GM12878 (cell line): ENCODE measurements at regions of chr4 and their contacts with region 1.

Region 1: GRCh38 chr4:109559983-109560686 is at the start of gene MCUB:
- DNase-seq: peak; percentile 49
- ATAC-seq: peak; percentile 95
- H3K4me3 ChIP-seq: peak within 1 kb of the TSS; percentile 85
- H3K27ac ChIP-seq: peak within 1 kb of the TSS; percentile 87
- H3K4me1 ChIP-seq: peaks cover 3% of the 10 kb centered on the region; the same call in 1 of the 2 replicates
- H3K27me3 ChIP-seq: no peaks in the 10 kb centered on the region
- CTCF ChIP-seq: no peak
- EP300 ChIP-seq: no peak
- POLR2A ChIP-seq: peak; percentile 87
- RAD21 ChIP-seq: peak; percentile 26; the same call in 1 of the 2 replicates
- polyA plus RNA-seq, gene MCUB: 4.7 to 10.7 TPM

Region 2: GRCh38 chr4:109067508-109068210 is 492.5 kb before region 1 on chr4:
- CTCF ChIA-PET with region 1: no interaction called
- POLR2A ChIA-PET with region 1: no interaction called
- RAD21 ChIA-PET with region 1: no interaction called
- SMC1A ChIA-PET with region 1: no interaction called
- in situ Hi-C with region 1: no loop called
- intact Hi-C with region 1: no loop called
- DNase-seq: no peak
- ATAC-seq: no peak
- H3K4me3 ChIP-seq: no peak overlapping the region
- H3K27ac ChIP-seq: no peak overlapping the region
- H3K4me1 ChIP-seq: no peaks in the 10 kb centered on the region
- H3K27me3 ChIP-seq: no peaks in the 10 kb centered on the region
- CTCF ChIP-seq: no peak
- EP300 ChIP-seq: no peak
- POLR2A ChIP-seq: no peak
- RAD21 ChIP-seq: no peak

Region 3: GRCh38 chr4:109574102-109574850 is 14.1 kb after region 1 on chr4:
- CTCF ChIA-PET with region 1: interaction called, 17 read pairs
- POLR2A ChIA-PET with region 1: interaction called, 5 read pairs
- RAD21 ChIA-PET with region 1: interaction called, 4 read pairs
- SMC1A ChIA-PET with region 1: interaction called, 11 read pairs
- in situ Hi-C with region 1: no loop called
- intact Hi-C with region 1: no loop called
- DNase-seq: no peak
- ATAC-seq: peak; percentile 70
- H3K4me3 ChIP-seq: no peak overlapping the region
- H3K27ac ChIP-seq: no peak overlapping the region
- H3K4me1 ChIP-seq: no peaks in the 10 kb centered on the region
- H3K27me3 ChIP-seq: no peaks in the 10 kb centered on the region
- CTCF ChIP-seq: peak in 2 of 3 experiments; percentile 25 to 26; a peak in 2 of 6 replicates
- EP300 ChIP-seq: no peak
- POLR2A ChIP-seq: no peak
- RAD21 ChIP-seq: peak; percentile 47; the same call in 1 of the 2 replicates

Region 4: DNA sequence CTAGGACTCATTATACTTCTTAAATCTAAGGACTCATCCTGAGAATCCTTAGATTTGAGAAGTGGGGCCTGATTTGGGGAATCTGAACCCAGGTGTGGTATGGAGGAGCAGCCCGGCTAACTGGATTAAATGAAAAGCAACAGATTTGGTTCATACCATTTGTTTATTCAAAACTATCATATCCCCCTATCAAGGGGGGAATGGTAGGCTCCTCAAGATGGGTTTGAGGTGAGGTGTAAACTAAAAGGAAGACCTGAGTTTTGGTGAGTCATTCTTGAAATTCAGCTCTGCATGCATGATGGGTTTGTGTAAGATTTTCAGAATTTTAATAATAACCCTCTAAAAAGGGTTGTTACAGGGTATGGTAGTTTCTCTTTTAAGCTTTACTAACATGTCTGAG is 89.7 kb after region 1 on chr4:
- CTCF ChIA-PET with region 1: interaction called, 3 read pairs
- POLR2A ChIA-PET with region 1: interaction called, 5 read pairs
- RAD21 ChIA-PET with region 1: interaction called, 3 read pairs
- SMC1A ChIA-PET with region 1: interaction called, 3 read pairs
- in situ Hi-C with region 1: no loop called
- intact Hi-C with region 1: loop called (anchors 2 kb)
- DNase-seq: peak; percentile 56
- ATAC-seq: peak; percentile 93
- H3K4me3 ChIP-seq: peak overlapping the region; percentile 13; the same call in 1 of the 2 replicates
- H3K27ac ChIP-seq: peak overlapping the region; percentile 58
- H3K4me1 ChIP-seq: peaks cover 28% of the 10 kb centered on the region
- H3K27me3 ChIP-seq: no peaks in the 10 kb centered on the region
- CTCF ChIP-seq: no peak
- EP300 ChIP-seq: no peak
- POLR2A ChIP-seq: no peak
- RAD21 ChIP-seq: no peak

Region 5: DNA sequence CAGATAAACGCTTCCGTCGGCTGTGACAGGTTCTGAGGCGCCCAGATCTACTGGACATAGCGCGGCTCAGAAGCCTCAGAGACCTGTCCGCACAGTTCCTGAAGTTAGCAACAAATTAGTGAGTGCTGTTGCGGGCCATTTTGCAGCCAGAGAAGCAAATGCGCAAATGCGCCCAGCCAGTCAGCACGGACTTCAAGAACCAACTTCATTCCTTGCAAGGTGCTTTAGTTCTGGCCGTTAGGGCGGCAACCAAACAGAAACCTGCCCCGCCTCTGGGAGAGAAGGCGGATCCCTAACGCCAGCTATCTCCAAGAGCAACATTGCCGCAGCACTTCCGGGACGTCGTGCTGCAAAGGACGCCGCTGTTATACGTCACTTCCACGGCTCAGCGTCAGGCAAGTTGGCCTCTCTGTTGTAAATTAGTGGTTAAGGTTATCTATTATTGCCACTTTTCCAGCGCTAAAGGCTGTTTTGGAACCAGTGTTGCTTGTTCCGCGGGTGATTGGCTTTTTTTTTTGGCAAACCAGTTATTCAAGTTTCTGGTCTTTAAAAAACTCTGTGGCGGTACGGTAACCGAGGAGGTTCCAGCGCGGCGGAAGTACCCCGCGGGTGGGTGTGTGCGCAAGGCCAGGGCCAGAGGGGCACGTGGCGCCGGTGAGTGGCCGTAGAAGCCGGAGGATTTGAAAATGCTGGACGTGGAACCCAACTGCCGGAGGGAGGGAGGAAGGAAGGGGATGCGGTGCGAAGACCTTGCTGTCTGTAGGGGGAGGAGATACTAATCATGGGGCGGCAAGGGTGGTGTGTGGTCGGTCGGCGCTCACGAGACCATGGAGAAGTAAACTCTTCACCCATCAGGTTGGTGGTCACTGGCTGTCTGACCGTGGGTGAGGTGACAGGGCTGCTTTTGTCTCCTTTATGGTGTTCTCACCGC is 255.3 kb after region 1 on chr4 and contains the start of gene GAR1:
- CTCF ChIA-PET with region 1: no interaction called
- POLR2A ChIA-PET with region 1: no interaction called
- RAD21 ChIA-PET with region 1: no interaction called
- SMC1A ChIA-PET with region 1: interaction called, 3 read pairs
- in situ Hi-C with region 1: no loop called
- intact Hi-C with region 1: loop called (anchors 5 kb)
- DNase-seq: peak; percentile 72
- ATAC-seq: peak; percentile 94
- H3K4me3 ChIP-seq: peak within 1 kb of the TSS; percentile 96
- H3K27ac ChIP-seq: peak within 1 kb of the TSS; percentile 91
- H3K4me1 ChIP-seq: no peaks in the 10 kb centered on the region
- H3K27me3 ChIP-seq: no peaks in the 10 kb centered on the region
- CTCF ChIP-seq: 0 out of 6 replicates have a peak, but pooled peaks of 1 of the 3 experiments have one; percentile 2
- EP300 ChIP-seq: peak in 1 of 2 experiments; percentile 19; a peak in 1 of 4 replicates
- POLR2A ChIP-seq: peak; percentile 81; the same call in 1 of the 2 replicates
- RAD21 ChIP-seq: no peak
- polyA plus RNA-seq, gene GAR1: 16.6 to 20.5 TPM

Region 6: DNA sequence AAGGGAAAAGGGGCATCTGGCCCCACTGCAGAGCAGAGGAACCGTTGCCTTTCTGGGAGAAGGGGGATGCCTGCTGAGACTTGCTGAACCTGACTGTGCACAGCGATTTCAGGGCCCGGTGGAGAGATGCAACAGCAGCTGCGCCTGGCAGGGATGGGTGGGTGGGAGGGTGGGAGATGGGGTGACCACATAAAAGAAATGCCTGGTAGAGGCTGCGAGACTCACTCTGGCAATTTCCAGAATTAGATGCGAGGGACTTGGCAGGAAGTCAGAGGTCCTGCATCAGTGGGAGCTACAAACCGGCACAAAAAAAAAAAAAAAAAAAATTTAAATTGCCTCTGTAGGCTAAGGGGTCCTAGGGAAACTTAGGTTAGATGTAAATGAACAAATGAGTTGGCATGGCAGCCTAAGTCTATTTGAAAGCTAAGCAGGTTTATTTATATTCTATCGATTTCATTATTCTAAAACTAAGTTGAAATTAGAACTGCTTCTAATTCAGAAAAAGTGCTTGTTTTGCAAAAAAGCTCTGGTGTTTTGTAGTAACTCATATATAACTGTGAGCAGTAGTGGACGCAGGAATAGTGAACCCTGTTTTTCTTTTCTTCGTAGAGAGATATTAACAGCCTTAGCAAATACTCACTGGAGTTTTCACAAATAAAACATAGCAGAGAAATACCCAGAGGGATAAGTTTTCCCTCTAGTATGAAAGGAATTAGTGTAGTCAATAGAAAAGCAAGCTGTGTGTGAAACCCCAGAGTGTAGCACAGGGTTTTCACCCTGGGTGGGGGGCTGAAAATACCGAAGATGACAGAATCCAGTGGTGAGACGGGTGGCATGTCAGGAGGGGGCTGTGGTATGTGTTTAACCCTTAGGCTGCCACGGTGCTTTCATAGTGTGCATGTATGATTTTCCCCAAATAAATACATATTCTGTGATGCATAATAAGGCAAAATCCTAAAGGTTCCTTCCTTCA is 482.7 kb after region 1 on chr4:
- CTCF ChIA-PET with region 1: no interaction called
- POLR2A ChIA-PET with region 1: no interaction called
- RAD21 ChIA-PET with region 1: no interaction called
- SMC1A ChIA-PET with region 1: no interaction called
- in situ Hi-C with region 1: no loop called
- intact Hi-C with region 1: no loop called
- DNase-seq: no peak
- ATAC-seq: no peak
- H3K4me3 ChIP-seq: no peak overlapping the region
- H3K27ac ChIP-seq: no peak overlapping the region
- H3K4me1 ChIP-seq: no peaks in the 10 kb centered on the region
- H3K27me3 ChIP-seq: no peaks in the 10 kb centered on the region
- CTCF ChIP-seq: no peak
- EP300 ChIP-seq: no peak
- POLR2A ChIP-seq: no peak
- RAD21 ChIP-seq: no peak

Region 7: DNA sequence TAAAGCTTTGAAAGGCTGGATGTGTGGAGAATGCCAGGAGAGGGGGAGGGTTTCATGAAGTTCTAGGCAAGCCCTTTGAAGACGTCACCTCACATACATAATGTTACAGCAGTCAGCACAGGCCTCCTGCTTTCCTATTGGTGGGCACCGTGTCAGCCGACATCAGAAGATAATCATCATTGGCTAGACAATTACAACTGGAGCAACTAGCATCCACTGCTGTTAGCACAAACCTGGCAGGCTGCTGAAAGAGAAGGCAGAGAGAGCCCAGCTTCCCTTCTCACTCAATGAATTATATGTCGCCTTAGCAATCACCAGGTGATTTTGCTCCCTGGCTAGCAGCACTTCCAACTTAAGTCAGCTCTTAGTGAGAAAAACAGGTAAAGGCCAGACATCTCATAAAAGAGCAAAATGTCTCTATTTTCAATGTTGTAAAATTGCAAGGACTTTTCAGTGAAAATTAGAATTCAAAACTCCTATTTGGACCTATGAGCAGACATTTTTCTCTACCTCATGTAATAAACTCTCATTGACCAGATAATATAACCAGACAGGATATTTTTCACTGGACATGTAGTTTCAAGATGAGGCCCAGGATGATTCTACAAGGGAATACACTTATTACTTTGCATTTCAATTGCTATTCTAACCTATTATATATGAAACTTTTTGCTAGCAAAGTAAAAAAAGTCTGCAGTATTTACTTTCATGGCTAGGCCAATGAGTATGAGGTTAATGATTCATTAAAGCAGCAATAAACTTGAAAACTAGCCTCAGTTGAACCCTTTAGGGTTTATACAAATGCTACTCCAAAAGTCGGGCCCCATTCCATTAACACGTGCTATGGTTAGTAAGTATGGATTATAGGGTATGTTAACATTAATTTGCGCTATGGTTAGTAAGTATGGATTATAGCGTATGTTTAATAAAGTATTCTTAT is 634.0 kb after region 1 on chr4:
- CTCF ChIA-PET with region 1: no interaction called
- POLR2A ChIA-PET with region 1: interaction called, 7 read pairs
- RAD21 ChIA-PET with region 1: no interaction called
- SMC1A ChIA-PET with region 1: no interaction called
- in situ Hi-C with region 1: no loop called
- intact Hi-C with region 1: loop called (anchors 10 kb)
- DNase-seq: peak; percentile 95
- ATAC-seq: peak; percentile 74
- H3K4me3 ChIP-seq: no peak overlapping the region
- H3K27ac ChIP-seq: peak overlapping the region; percentile 75
- H3K4me1 ChIP-seq: peaks cover 19% of the 10 kb centered on the region
- H3K27me3 ChIP-seq: no peaks in the 10 kb centered on the region
- CTCF ChIP-seq: no peak
- EP300 ChIP-seq: no peak
- POLR2A ChIP-seq: peak; percentile 89
- RAD21 ChIP-seq: no peak

Region 8: GRCh38 chr4:111136438-111136837 is 1576.3 kb after region 1 on chr4:
- CTCF ChIA-PET with region 1: no interaction called
- POLR2A ChIA-PET with region 1: no interaction called
- RAD21 ChIA-PET with region 1: no interaction called
- SMC1A ChIA-PET with region 1: no interaction called
- in situ Hi-C with region 1: no loop called
- intact Hi-C with region 1: no loop called
- DNase-seq: no peak
- ATAC-seq: no peak
- H3K4me3 ChIP-seq: no peak overlapping the region
- H3K27ac ChIP-seq: no peak overlapping the region
- H3K4me1 ChIP-seq: no peaks in the 10 kb centered on the region
- H3K27me3 ChIP-seq: no peaks in the 10 kb centered on the region
- CTCF ChIP-seq: peak in 2 of 3 experiments; percentile 8 to 18; a peak in 3 of 6 replicates
- EP300 ChIP-seq: no peak
- POLR2A ChIP-seq: no peak
- RAD21 ChIP-seq: peak; percentile 38; the same call in 1 of the 2 replicates